SK-N-SH (cell line): ENCODE measurements at regions of chr17 and their contacts with region 1.

Region 1: DNA sequence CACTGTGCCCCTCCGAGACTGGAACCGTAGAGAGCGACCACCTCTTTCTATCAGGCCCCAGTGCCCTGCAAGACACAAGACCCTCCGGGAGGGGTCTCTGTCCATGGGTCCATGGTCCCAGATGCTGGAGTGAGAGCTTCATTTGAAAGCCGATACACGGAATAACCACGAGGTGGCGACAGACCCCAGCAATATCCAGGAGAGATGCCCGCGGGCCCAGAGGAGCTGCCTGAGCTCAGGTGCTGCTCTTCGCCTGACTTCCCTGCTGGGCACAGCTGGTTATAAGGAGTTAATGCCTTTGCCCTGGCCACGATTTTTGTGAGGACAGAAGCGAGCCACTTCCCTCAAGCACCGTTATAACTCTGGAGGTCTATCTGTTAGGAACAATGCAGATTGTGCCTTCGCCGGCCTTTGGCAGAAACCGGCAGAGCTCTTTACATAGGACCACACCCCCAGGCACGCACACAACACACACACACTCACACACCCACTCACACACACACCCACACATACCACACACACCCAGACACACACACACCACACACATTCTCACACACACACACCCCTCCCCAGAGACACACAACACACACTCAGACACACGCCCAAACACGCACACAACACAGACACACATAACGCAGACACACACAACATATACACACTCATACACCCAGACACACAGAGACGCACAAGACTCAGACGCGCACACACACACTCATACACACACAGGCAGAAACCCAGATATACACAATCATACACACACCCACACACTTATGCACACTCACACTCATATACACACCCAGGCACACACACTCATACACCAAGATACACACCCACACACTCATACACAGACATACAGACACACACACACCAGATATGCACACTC is 436.4 kb downstream of the SOX9 start:
- DNase-seq: peak; percentile 91
- H3K4me3 ChIP-seq: no peak overlapping the region; a peak in 1 of 4 replicates
- H3K27ac ChIP-seq: no peak overlapping the region
- H3K4me1 ChIP-seq: no peaks in the 10 kb centered on the region
- H3K27me3 ChIP-seq: no peaks in the 10 kb centered on the region
- CTCF ChIP-seq: peak; percentile 98
- EP300 ChIP-seq: no peak
- RAD21 ChIP-seq: peak; percentile 93

Region 2: DNA sequence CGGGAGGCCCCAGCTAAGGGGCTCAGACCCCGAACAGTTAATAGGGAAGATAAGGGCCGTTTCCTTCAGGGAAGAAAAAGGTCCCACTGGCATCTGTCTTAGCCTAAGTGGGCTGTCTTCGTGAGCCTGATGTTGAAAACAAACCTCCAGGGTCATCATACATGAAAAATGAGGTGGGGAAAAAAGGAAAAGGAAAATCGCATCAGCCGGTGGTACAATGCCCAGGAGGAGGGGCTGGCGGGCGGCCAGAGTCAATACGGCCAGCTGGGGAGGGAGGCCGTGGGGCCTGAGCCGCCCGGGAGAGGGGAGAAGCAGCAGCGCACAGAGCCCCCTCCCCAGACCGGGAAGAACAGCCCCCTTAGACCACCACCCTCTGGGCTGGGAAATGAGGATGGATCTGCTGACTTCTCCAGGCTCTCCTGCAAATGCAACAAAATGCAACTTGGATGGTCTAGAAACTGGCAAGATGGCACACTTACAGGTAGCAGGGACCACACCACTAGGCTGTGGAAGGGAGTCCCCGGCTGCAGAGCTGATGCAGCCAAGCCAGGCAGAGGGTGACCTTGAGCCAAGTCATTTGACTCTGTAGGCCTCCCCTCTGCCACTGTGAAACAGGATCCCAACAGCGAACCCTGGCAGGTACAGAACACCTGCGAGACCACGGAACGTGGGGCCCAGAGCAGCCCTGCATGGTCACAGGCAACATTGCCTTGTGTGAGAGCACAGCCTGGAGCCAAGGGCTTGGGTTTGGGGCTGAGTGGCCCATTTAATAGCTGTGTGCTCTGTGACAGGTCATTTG is 12.2 kb after region 1 on chr17:
- CTCF ChIA-PET with region 1: interaction called, 28 read pairs
- POLR2A ChIA-PET with region 1: no interaction called
- DNase-seq: peak; percentile 58
- H3K4me3 ChIP-seq: no peak overlapping the region
- H3K27ac ChIP-seq: no peak overlapping the region
- H3K4me1 ChIP-seq: peaks cover 0 to 19% of the 10 kb centered on the region in 2 experiments; a peak in 1 of 4 replicates
- H3K27me3 ChIP-seq: no peaks in the 10 kb centered on the region
- CTCF ChIP-seq: no peak
- EP300 ChIP-seq: no peak
- RAD21 ChIP-seq: no peak

Region 3: DNA sequence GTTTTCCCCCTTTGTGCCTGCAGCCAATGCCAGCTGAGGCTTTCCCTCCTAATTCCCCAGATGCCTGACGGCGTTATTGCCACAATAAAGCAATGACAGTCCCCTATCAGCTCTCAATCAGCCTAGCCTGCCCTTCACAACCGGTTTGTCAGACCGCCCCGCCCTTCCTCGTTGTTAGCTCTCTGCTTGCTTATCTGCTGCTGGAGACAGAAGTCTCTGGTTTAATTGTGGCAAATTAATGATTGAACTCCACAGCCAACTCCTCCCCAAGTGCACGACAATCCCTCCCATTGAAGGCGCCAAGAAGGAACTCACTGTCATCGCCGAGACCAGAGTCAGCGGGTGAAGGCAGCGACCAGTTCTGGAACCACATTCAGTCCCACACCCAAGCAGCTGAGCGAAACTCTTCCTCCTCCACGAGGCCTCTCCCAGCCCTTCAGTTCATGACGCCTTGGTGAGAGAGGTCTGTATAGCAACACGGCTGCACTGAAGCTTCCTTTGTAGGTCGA is 60.9 kb after region 1 on chr17:
- CTCF ChIA-PET with region 1: interaction called, 13 read pairs
- POLR2A ChIA-PET with region 1: no interaction called
- DNase-seq: peak; percentile 80
- H3K4me3 ChIP-seq: peak overlapping the region in 1 of 2 experiments; percentile 7; a peak in 1 of 4 replicates
- H3K27ac ChIP-seq: no peak overlapping the region
- H3K4me1 ChIP-seq: peaks cover 10 to 12% of the 10 kb centered on the region in 2 experiments; a peak in 2 of 4 replicates
- H3K27me3 ChIP-seq: no peaks in the 10 kb centered on the region
- CTCF ChIP-seq: no peak
- EP300 ChIP-seq: no peak; a peak in 1 of 4 replicates
- RAD21 ChIP-seq: no peak

Region 4: GRCh38 chr17:72661093-72661944 is 104.1 kb after region 1 on chr17:
- CTCF ChIA-PET with region 1: interaction called, 13 read pairs
- POLR2A ChIA-PET with region 1: no interaction called
- DNase-seq: peak; percentile 27
- H3K4me3 ChIP-seq: no peak overlapping the region
- H3K27ac ChIP-seq: no peak overlapping the region
- H3K4me1 ChIP-seq: peaks cover 7 to 10% of the 10 kb centered on the region in 2 experiments; a peak in 2 of 4 replicates
- H3K27me3 ChIP-seq: no peaks in the 10 kb centered on the region
- CTCF ChIP-seq: peak; percentile 47
- EP300 ChIP-seq: no peak
- RAD21 ChIP-seq: no peak

Region 5: DNA sequence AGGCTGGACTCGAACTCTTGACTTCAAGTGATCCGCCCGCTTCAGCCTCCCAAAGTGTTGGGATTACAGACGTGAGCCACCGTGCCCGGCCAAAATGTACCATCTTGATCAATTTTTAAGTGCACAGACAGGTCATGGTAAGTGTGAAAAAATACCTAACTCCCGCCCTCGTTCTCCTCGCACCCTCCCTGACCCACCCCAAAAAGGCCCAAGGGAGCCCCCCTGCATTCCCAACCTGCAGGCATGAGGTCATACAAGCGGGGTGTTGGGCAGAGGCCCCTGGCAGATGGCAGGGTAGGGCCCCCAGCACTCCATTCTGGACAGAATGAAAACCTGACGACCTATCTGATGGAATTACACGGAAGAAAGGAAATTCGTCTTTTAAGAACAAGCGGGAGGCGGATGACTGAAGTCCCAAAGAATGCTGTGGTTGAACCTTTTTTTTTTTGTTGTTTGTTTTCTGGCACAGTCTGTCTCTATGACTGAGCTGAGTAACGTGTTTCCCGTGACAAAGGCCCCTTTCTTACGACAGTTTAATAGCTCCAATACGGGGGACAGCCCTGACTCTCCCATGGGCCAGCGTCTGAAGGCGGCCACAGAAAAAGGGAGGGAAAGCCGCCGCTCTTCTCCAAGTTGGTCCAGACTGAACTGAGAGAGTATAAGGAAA is 158.9 kb after region 1 on chr17:
- CTCF ChIA-PET with region 1: interaction called, 104 read pairs
- POLR2A ChIA-PET with region 1: no interaction called
- DNase-seq: no peak
- H3K4me3 ChIP-seq: no peak overlapping the region; a peak in 1 of 4 replicates
- H3K27ac ChIP-seq: peak overlapping the region in 1 of 2 experiments; percentile 94; a peak in 2 of 4 replicates
- H3K4me1 ChIP-seq: peaks cover 5 to 10% of the 10 kb centered on the region in 2 experiments; a peak in 3 of 4 replicates
- H3K27me3 ChIP-seq: no peaks in the 10 kb centered on the region
- CTCF ChIP-seq: no peak
- EP300 ChIP-seq: peak in 1 of 2 experiments; percentile 95; a peak in 2 of 4 replicates
- RAD21 ChIP-seq: no peak

Region 6: GRCh38 chr17:73182616-73183310 is 625.6 kb after region 1 on chr17:
- CTCF ChIA-PET with region 1: interaction called, 14 read pairs
- POLR2A ChIA-PET with region 1: no interaction called
- DNase-seq: peak; percentile 62
- H3K4me3 ChIP-seq: no peak overlapping the region
- H3K27ac ChIP-seq: 0 out of 4 replicates have a peak overlapping the region, but pooled peaks of 1 of the 2 experiments have one; percentile 8
- H3K4me1 ChIP-seq: peaks cover 0 to 6% of the 10 kb centered on the region in 2 experiments; a peak in 1 of 4 replicates
- H3K27me3 ChIP-seq: no peaks in the 10 kb centered on the region
- CTCF ChIP-seq: no peak
- EP300 ChIP-seq: no peak; a peak in 1 of 4 replicates
- RAD21 ChIP-seq: no peak